Dorsolateral prefrontal cortex (tissue), 120 donors: ENCODE measurements at regions of chr5 and their contacts with region 1.

Region 1: GRCh38 chr5:95822542-95823181 is at the start of gene GLRX:
- DNase-seq: peak in 9 of 10 donors; percentile 63 to 83 (median 74)
- H3K4me3 ChIP-seq: peak within 1 kb of the TSS; percentile 53 to 96 (median 79)
- H3K27ac ChIP-seq: peak within 1 kb of the TSS in 56 of 59 donors; percentile 7 to 92 (median 80)
- H3K27me3 ChIP-seq: no peaks in the 10 kb centered on the region
- CTCF ChIP-seq: no peak
- total RNA-seq, gene GLRX: 13.7 to 109 (median 43.0) TPM

Region 2: GRCh38 chr5:95554647-95555548 is 267.8 kb before region 1 on chr5 and contains the starts of genes ARSK and SKIC3:
- intact Hi-C with region 1: loop called in 1 of 2 experiments (anchors 10 kb)
- DNase-seq: peak; percentile 90 to 98 (median 94)
- H3K4me3 ChIP-seq: peak within 1 kb of the TSS; percentile 61 to 100 (median 89)
- H3K27ac ChIP-seq: peak within 1 kb of the TSS; percentile 55 to 96 (median 86)
- H3K27me3 ChIP-seq: no peaks in the 10 kb centered on the region
- CTCF ChIP-seq: peak in 46 of 56 donors; percentile 4 to 55 (median 37)
- total RNA-seq, gene ARSK: 4.7 to 15.9 (median 8.7) TPM
- total RNA-seq, gene SKIC3: 75.4 to 149 (median 113) TPM